ENCODE measurements at regions of chr2 and their contacts with region 1.

Region 1: GRCh38 chr2:206274434-206275268 is at the start of gene ZDBF2:
- DNase-seq: peak; percentile 69
- H3K4me3 ChIP-seq: peak within 1 kb of the TSS; percentile 74
- H3K27ac ChIP-seq: peak within 1 kb of the TSS; percentile 42
- H3K4me1 ChIP-seq: peaks cover 37% of the 10 kb centered on the region
- CTCF ChIP-seq: no peak
- total RNA-seq, gene ZDBF2: 13.9 and 14.0 TPM in 2 replicates

Region 2: DNA sequence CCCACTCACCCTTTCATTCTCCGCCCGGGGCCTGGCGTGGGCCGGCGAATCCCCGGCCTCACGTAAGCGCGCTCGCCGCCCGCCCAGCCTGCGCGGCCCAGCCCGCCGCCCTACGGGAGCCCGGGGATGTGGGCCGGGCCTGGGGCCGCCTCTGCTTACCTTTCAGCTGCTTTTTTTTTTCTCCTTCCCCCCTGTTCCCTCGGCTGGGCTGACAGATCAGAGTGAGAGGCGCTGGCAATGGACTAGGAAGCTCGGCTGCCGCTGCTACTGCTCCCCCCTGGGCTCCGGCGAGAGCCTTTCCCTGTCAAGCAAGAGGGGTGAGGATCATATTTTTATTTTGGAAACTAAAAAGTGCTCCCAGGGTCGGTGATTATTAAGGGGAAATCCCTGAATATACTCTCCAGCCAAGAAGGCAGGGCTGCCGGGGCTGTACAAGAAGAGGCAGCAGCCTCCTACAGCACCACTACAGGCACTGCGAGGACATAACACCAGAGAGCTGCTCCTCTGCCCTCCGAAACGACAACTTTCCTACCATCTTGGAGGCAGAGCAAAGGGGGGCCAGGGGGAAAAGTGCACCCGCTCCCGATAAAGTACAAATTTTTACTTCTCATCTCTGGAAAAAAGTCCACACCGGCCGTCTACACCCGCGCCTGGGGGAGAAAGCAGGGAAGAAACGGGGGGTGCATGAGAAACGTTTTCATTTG is 188.8 kb before region 1 on chr2 and contains the start of gene INO80D:
- CTCF ChIA-PET with region 1: no interaction called
- POLR2A ChIA-PET with region 1: interaction called, 3 read pairs
- intact Hi-C with region 1: loop called (anchors 1 kb)
- DNase-seq: peak; percentile 89
- H3K4me3 ChIP-seq: peak within 1 kb of the TSS; percentile 92
- H3K27ac ChIP-seq: peak within 1 kb of the TSS; percentile 94
- H3K4me1 ChIP-seq: peaks cover 29% of the 10 kb centered on the region
- CTCF ChIP-seq: peak; percentile 75
- total RNA-seq, gene INO80D: 8.2 and 14.2 TPM in 2 replicates

Region 3: GRCh38 chr2:206249714-206250591 is 24.7 kb before region 1 on chr2:
- CTCF ChIA-PET with region 1: no interaction called
- POLR2A ChIA-PET with region 1: interaction called, 6 read pairs
- intact Hi-C with region 1: loop called (anchors 1 kb)
- DNase-seq: peak; percentile 13
- H3K4me3 ChIP-seq: no peak overlapping the region
- H3K27ac ChIP-seq: no peak overlapping the region
- H3K4me1 ChIP-seq: peaks cover 25% of the 10 kb centered on the region
- CTCF ChIP-seq: 0 out of 2 replicates have a peak, but pooled peaks have one; percentile 27

Measured in OCI-LY7 (cell line).